Breast epithelium (tissue), 4 donors: ENCODE measurements at regions of chr10 and their contacts with region 1.

Region 1: DNA sequence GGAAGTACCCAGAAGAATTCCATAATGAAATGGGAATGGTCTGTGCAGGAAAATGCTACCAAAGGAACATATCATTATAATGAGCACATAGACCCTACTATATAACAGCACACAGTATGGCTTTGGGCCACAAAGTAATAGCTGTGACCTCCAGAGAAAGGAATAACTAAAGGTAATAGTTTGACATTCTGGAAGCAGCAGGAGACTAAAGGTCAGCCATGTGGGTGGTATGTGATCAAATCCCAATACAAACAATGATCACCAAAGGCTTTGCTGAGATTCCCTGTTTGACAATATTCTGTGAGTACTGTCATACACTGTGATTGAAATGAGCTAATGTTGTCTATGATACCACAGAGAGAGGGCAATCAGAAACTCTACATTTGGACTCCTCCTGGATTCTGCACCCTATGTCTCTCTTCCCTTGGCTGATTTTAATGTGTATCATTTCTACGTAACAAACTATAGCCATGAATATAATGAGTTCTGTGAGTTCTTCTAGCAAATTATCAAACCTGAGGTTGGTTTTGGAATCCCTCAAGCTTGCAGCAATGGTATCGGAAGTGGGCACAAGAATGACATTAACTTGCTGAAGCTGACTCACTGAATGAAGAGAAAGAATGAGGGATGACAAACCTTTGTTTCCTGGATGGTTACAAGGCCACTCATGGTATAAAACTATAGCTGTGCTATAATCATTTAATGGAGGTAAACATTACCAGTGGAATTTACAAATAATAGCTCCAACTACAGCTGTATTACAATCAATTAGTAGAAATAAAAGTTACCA is 99.6 kb downstream of the JMJD1C start:
- DNase-seq: no peak
- H3K4me3 ChIP-seq: no peak overlapping the region
- H3K27ac ChIP-seq: no peak overlapping the region
- H3K4me1 ChIP-seq: no peaks in the 10 kb centered on the region
- H3K27me3 ChIP-seq: no peaks in the 10 kb centered on the region
- CTCF ChIP-seq: no peak
- POLR2A ChIP-seq: no peak

Region 2: DNA sequence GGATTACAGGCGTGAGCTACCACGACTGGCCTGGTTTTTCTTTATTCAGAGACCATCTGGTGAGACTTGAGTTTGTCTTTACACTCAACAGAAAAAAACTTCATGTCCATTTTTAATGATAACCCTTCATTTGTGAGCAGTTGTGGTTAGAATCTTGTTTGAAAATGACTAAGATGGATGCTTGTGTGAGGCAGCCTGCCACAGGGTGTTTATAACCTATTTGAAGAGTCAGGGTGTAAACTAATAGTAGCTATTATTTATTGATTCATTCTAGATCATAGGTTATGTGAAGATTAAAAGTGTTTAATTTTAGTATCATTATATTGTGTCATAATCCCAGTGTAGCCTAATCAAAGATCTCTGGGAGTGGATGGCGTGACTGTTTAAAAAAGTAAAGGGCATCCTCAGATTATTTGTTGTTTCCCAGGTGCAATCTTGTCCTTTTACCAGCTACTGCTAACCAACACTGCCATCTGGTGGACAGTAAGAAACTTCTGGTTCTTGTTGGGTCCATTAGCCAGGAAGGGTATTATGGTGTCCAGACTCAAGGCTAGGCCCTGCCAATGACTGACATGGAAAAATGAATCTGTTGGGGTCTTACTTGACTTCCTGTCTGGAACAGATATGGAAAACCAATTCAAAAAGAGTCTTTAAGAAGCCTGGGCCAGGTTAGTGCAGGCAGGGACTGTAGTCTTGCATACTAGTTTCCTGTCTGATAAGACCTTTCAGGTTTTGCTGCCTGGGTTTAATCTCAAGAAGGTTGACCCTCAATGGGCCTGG is 208.1 kb before region 1 on chr10:
- intact Hi-C with region 1: no loop called
- DNase-seq: no peak
- H3K4me3 ChIP-seq: no peak overlapping the region
- H3K27ac ChIP-seq: peak overlapping the region in 1 of 2 donors; percentile 2
- H3K4me1 ChIP-seq: peaks cover 0 to 8% of the 10 kb centered on the region in 2 donors
- H3K27me3 ChIP-seq: no peaks in the 10 kb centered on the region
- CTCF ChIP-seq: peak; percentile 75 to 87 (median 80)
- POLR2A ChIP-seq: no peak

Region 3: DNA sequence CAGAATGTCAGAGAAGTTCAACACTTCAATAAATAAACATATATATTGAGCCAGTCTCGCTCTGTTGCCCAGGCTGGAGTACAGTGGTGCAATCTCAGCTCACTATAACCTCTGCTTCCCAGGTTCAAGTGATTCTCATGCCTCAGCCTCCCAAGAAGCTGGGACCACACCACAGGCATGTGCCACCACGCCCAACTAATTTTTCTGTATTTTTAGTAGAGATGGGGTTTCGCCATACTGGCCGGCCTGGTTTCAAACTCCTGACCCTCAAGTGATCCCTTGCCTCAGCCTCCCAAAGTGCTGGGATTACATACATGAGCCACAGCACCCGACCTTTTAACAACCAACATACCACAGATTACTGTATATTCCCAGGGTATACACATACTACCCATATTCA is 34.6 kb before region 1 on chr10:
- intact Hi-C with region 1: no loop called
- DNase-seq: no peak
- H3K4me3 ChIP-seq: no peak overlapping the region
- H3K27ac ChIP-seq: no peak overlapping the region
- H3K4me1 ChIP-seq: no peaks in the 10 kb centered on the region
- H3K27me3 ChIP-seq: no peaks in the 10 kb centered on the region
- CTCF ChIP-seq: no peak
- POLR2A ChIP-seq: no peak

Region 4: GRCh38 chr10:63431962-63432797 is 66.0 kb after region 1 on chr10:
- intact Hi-C with region 1: loop called (anchors 2 kb)
- DNase-seq: no peak
- H3K4me3 ChIP-seq: no peak overlapping the region
- H3K27ac ChIP-seq: no peak overlapping the region
- H3K4me1 ChIP-seq: no peaks in the 10 kb centered on the region
- H3K27me3 ChIP-seq: no peaks in the 10 kb centered on the region
- CTCF ChIP-seq: no peak
- POLR2A ChIP-seq: no peak

Region 5: DNA sequence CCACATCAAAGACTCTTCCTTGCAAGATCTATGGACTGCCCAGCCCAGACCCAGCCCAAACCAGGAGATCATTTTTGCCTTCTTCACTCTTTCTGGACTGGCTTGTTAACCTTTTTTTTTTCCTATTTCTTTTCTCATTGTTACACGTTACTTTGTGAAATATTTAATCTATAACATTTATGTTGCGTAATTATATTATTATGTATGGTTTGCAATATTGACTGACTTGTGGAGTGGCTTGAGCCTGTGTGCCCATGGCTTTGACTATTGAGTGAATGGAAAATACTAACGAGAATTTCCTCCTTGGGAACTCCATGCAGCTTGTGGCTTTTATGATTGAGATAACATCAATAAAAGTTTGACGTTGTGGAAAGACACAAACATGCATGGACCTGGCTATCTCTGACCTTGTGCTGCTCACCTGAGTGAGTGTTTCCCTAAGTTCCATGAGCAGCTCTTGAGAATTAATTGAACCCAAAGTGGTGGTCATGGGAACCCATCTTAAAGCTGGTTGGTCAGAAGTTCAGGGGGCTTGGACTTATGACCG is 1918.4 kb after region 1 on chr10:
- intact Hi-C with region 1: no loop called
- DNase-seq: no peak
- H3K4me3 ChIP-seq: no peak overlapping the region
- H3K27ac ChIP-seq: no peak overlapping the region
- H3K4me1 ChIP-seq: no peaks in the 10 kb centered on the region
- H3K27me3 ChIP-seq: no peaks in the 10 kb centered on the region
- CTCF ChIP-seq: no peak
- POLR2A ChIP-seq: no peak